B cell (primary cell): ENCODE measurements at regions of chr5 and their contacts with region 1.

Region 1: DNA sequence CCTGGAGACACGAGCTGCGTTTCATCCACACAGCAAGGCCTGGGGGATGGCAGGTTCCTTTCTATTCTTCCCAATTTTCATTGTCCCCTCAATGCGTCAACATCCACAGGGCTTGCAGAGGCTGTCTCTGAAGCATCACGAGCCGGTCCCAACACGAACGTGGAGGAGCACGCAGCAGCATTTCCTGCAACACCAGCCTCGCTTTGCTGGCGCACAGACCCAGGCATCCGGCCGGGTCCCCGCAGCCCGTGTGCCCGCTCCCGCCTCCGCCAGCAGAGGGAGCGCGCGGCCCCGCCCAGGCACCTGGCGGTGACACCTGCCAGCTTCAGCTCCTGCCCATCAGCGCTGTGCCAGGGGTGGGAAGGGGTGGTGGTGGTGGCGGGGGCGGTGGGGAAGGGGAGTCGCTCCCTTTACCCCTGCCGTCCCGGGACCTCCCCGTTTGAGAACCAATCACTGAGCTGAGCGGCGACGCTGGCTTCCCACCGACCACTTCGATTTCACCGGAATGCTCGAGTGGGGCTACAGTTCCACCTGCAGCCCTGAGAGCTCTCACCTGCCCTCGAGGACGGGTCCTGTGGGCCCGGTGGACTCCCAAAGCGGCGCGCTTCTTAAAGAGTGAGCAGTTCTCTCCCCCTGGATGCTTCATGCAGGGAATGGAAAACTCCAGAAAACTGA is 464.5 kb downstream of the ICE1 start:
- DNase-seq: peak; percentile 58
- ATAC-seq: peak; percentile 95
- H3K4me3 ChIP-seq: peak overlapping the region in 1 of 5 experiments; percentile 15
- H3K4me3 Mint-ChIP-seq: peak overlapping the region; percentile 26
- H3K27ac ChIP-seq: no peak overlapping the region
- H3K27ac Mint-ChIP-seq: no peak overlapping the region
- H3K4me1 ChIP-seq: peaks cover 0 to 3% of the 10 kb centered on the region in 2 donors
- H3K4me1 Mint-ChIP-seq: peaks cover 2% of the 10 kb centered on the region
- H3K27me3 ChIP-seq: no peaks in the 10 kb centered on the region
- H3K27me3 Mint-ChIP-seq: peaks cover 15% of the 10 kb centered on the region
- CTCF ChIP-seq: peak; percentile 77

Region 2: GRCh38 chr5:6576861-6577501 is 690.0 kb after region 1 on chr5:
- CTCF ChIA-PET with region 1: no interaction called
- POLR2A ChIA-PET with region 1: no interaction called
- intact Hi-C with region 1: loop called (anchors 5 kb)
- DNase-seq: peak; percentile 27
- ATAC-seq: no peak
- H3K4me3 ChIP-seq: no peak overlapping the region
- H3K4me3 Mint-ChIP-seq: no peak overlapping the region
- H3K27ac ChIP-seq: no peak overlapping the region
- H3K27ac Mint-ChIP-seq: no peak overlapping the region
- H3K4me1 ChIP-seq: no peaks in the 10 kb centered on the region
- H3K4me1 Mint-ChIP-seq: no peaks in the 10 kb centered on the region
- H3K27me3 ChIP-seq: peaks cover 0 to 17% (median 0%) of the 10 kb centered on the region in 4 experiments
- H3K27me3 Mint-ChIP-seq: peaks cover 32% of the 10 kb centered on the region
- CTCF ChIP-seq: peak; percentile 32